Esophagus squamous epithelium (tissue), 5 donors: ENCODE measurements at regions of chr19 and their contacts with region 1.

Region 1: GRCh38 chr19:7799640-7800355 is 30.2 kb upstream of the EVI5L start:
- DNase-seq: no peak
- H3K4me3 ChIP-seq: peak overlapping the region in 2 of 4 donors; percentile 11 to 56
- H3K27ac ChIP-seq: no peak overlapping the region
- H3K4me1 ChIP-seq: peaks cover 0 to 19% (median 4%) of the 10 kb centered on the region in 3 donors
- H3K27me3 ChIP-seq: peaks cover 0 to 90% (median 3%) of the 10 kb centered on the region in 4 donors
- CTCF ChIP-seq: peak; percentile 38 to 80 (median 56)
- POLR2A ChIP-seq: no peak

Region 2: DNA sequence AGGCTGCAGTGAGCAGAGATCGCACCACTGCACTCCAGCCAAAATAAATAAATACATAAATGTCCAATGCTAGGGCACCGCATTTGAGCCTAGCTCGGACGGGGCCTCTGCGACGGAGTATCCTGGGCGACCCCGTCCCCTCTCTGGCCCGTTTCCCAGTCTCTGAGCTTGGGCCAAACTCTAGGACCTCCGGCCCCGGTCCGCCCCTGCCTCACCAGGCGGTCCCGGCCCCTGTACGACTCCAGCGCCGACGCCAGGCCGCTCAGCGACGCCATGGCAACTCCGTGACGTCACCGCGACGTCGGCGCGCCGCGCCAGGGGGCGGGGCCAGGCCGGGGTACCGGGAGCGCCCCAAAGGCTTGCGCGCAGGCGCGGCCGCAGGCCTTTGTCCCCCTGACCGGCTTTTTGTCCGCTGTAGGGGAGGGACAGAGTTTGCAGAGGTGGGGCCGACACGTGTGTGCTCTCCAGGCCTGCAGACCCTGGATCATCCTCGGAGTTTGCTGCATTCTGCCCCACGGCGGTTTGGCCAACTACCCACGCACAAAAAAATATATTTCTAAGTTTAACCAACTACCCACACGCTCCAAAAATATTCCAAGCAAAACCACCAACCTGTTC is 311.0 kb before region 1 on chr19 and contains the start of gene PEX11G:
- intact Hi-C with region 1: no loop called
- DNase-seq: peak; percentile 14
- H3K4me3 ChIP-seq: peak within 1 kb of the TSS; percentile 57 to 89 (median 60)
- H3K27ac ChIP-seq: peak within 1 kb of the TSS; percentile 81 to 92 (median 86)
- H3K4me1 ChIP-seq: peaks cover 6 to 24% (median 12%) of the 10 kb centered on the region in 3 donors
- H3K27me3 ChIP-seq: no peaks in the 10 kb centered on the region
- CTCF ChIP-seq: peak in 3 of 6 experiments; percentile 7 to 28 (median 12)
- POLR2A ChIP-seq: peak in 3 of 4 donors; percentile 56 to 83 (median 58)
- total RNA-seq, gene PEX11G: 1.1 to 6.7 (median 4.1) TPM

Region 3: GRCh38 chr19:7680606-7681339 is 119.0 kb before region 1 on chr19 and contains the start of gene TRAPPC5:
- intact Hi-C with region 1: loop called (anchors 10 kb)
- DNase-seq: no peak
- H3K4me3 ChIP-seq: peak within 1 kb of the TSS; percentile 84 to 99 (median 96)
- H3K27ac ChIP-seq: peak within 1 kb of the TSS; percentile 93 to 96 (median 95)
- H3K4me1 ChIP-seq: peaks cover 9 to 36% (median 10%) of the 10 kb centered on the region in 3 donors
- H3K27me3 ChIP-seq: peaks cover 0 to 43% (median 0%) of the 10 kb centered on the region in 4 donors
- CTCF ChIP-seq: peak; percentile 90 to 99 (median 98)
- POLR2A ChIP-seq: peak in 2 of 4 donors; percentile 46 to 66
- total RNA-seq, gene TRAPPC5: 52.3 to 91.5 (median 77.4) TPM

Region 4: DNA sequence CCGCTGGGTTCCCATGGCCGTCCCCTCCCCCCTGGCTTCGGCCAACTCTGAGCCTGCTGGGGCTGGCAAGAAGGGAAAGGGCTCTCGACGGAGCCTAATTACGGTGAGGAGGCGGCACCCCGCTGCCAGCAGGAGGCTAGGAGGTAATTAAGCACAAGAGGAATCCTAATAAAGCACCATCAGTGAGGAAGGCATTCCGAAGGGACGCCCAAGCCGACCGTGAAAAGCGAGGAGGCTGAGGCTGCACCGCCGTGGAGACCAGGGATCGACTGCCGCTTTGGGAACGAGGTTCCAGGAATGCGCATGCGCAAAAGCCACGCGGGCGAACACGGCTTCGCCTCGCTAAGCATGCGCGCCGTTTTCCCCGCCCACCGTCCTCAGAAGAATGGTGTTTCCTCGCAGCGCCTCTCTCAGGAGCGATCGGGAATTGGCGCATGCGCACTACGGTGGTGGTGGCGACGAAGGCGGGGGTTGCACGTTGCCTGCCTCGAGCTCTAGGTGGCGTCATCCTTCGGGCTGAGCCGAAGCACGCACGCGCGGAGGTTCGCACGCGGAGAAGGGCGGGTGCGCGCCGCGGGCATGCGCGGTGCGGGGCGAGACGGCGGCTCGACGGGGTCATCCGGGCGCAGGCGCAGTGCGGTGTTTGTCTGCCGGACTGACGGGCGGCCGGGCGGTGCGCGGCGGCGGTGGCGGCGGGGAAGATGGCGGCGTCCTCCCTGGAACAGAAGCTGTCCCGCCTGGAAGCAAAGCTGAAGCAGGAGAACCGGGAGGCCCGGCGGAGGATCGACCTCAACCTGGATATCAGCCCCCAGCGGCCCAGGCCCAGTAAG is 103.7 kb after region 1 on chr19 and contains the start of gene MAP2K7:
- intact Hi-C with region 1: no loop called
- DNase-seq: peak; percentile 90
- H3K4me3 ChIP-seq: peak within 1 kb of the TSS; percentile 66 to 99 (median 78)
- H3K27ac ChIP-seq: peak within 1 kb of the TSS; percentile 88 to 95 (median 92)
- H3K4me1 ChIP-seq: peaks cover 28 to 80% (median 56%) of the 10 kb centered on the region in 3 donors
- H3K27me3 ChIP-seq: peaks cover 0 to 11% (median 0%) of the 10 kb centered on the region in 4 donors
- CTCF ChIP-seq: peak; percentile 3 to 96 (median 42)
- POLR2A ChIP-seq: peak in 3 of 4 donors; percentile 66 to 86 (median 71)
- total RNA-seq, gene MAP2K7: 8.6 to 17.3 (median 13.8) TPM